Esophagus squamous epithelium (tissue), 5 donors: ENCODE measurements at regions of chr1 and their contacts with region 1.

Region 1: GRCh38 chr1:95072532-95073419 is at the start of gene ALG14:
- DNase-seq: peak; percentile 75
- H3K4me3 ChIP-seq: peak within 1 kb of the TSS; percentile 64 to 84 (median 71)
- H3K27ac ChIP-seq: peak within 1 kb of the TSS; percentile 84 to 96 (median 94)
- H3K4me1 ChIP-seq: peaks cover 0 to 15% (median 5%) of the 10 kb centered on the region in 3 donors
- H3K27me3 ChIP-seq: peaks cover 0 to 4% (median 0%) of the 10 kb centered on the region in 4 donors
- CTCF ChIP-seq: peak in 1 of 6 experiments; percentile 29
- POLR2A ChIP-seq: peak in 3 of 4 donors; percentile 16 to 72 (median 39)
- total RNA-seq, gene ALG14: 0.53 to 1.3 (median 1.0) TPM

Region 2: GRCh38 chr1:95233737-95234500 is 161.1 kb after region 1 on chr1 and contains the start of gene RWDD3:
- intact Hi-C with region 1: loop called (anchors 10 kb)
- DNase-seq: peak; percentile 58
- H3K4me3 ChIP-seq: peak within 1 kb of the TSS; percentile 68 to 91 (median 85)
- H3K27ac ChIP-seq: peak within 1 kb of the TSS; percentile 85 to 90 (median 88)
- H3K4me1 ChIP-seq: peaks cover 7 to 73% (median 8%) of the 10 kb centered on the region in 3 donors
- H3K27me3 ChIP-seq: no peaks in the 10 kb centered on the region
- CTCF ChIP-seq: peak; percentile 80 to 95 (median 90)
- POLR2A ChIP-seq: peak in 2 of 4 donors; percentile 66
- total RNA-seq, gene RWDD3: 1.8 to 11.8 (median 7.6) TPM